ENCODE measurements at regions of chrX and their contacts with region 1.

Region 1: GRCh38 chrX:154298312-154298711 is 2.7 kb downstream of the TKTL1 start:
- DNase-seq: no peak
- ATAC-seq: no peak
- H3K4me3 Mint-ChIP-seq: no peak overlapping the region
- H3K27ac Mint-ChIP-seq: no peak overlapping the region
- H3K4me1 Mint-ChIP-seq: peaks cover 2% of the 10 kb centered on the region
- H3K27me3 Mint-ChIP-seq: no peaks in the 10 kb centered on the region
- CTCF ChIP-seq: no peak

Region 2: GRCh38 chrX:154308108-154308946 is 10.0 kb after region 1 on chrX:
- CTCF ChIA-PET with region 1: interaction called, 10 read pairs
- POLR2A ChIA-PET with region 1: interaction called, 3 read pairs
- intact Hi-C with region 1: no loop called
- DNase-seq: peak; percentile 90
- ATAC-seq: peak; percentile 72
- H3K4me3 Mint-ChIP-seq: no peak overlapping the region
- H3K27ac Mint-ChIP-seq: peak overlapping the region; percentile 53
- H3K4me1 Mint-ChIP-seq: peaks cover 45% of the 10 kb centered on the region
- H3K27me3 Mint-ChIP-seq: no peaks in the 10 kb centered on the region
- CTCF ChIP-seq: peak; percentile 71

Region 3: DNA sequence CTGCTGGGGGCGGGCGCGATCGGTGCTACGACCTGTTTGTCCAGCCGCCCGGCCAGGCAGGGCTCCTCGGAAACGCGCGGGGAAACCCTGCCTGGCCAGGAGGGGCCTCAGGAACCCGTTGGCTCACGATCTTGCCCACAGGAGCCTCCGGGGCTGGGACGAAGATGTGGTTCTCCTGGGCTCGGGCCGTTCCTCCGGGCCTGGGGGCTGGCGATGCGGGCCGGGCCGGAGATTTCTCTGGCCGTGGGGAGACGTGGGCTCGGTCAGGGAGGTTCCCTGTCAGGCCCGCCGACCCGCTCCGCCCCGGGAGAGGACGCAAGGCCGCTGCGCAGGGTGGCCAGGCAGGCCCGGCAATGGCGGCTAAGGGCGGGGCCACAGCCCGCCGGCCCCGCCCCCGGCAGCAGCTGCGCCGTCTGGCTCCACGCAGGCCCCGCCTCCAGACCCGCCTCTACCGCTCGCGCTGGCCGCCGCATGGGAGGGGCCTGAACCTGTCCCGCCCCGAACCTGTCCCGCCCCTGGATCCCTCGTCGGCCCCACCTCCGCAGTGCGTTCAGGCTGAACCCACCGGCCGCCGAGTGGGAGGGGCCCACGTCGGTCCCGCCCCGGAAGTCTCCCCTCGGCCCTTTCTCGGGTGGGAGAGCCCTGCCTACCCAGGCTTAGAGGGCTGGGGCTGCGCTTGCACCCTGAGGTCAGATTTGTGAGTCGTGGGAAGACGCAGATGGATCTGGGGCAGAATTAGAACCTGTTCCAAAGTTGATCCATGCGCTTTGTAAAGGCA is 217.8 kb after region 1 on chrX and contains the start of gene FAM3A:
- CTCF ChIA-PET with region 1: no interaction called
- POLR2A ChIA-PET with region 1: no interaction called
- intact Hi-C with region 1: no loop called
- DNase-seq: peak; percentile 93
- ATAC-seq: peak; percentile 99
- H3K4me3 Mint-ChIP-seq: peak within 1 kb of the TSS; percentile 82
- H3K27ac Mint-ChIP-seq: peak within 1 kb of the TSS; percentile 92
- H3K4me1 Mint-ChIP-seq: peaks cover 29% of the 10 kb centered on the region
- H3K27me3 Mint-ChIP-seq: no peaks in the 10 kb centered on the region
- CTCF ChIP-seq: no peak
- total RNA-seq, gene FAM3A: 27.9 to 31.9 TPM